ENCODE measurements at regions of chr5 and their contacts with region 1.

Region 1: DNA sequence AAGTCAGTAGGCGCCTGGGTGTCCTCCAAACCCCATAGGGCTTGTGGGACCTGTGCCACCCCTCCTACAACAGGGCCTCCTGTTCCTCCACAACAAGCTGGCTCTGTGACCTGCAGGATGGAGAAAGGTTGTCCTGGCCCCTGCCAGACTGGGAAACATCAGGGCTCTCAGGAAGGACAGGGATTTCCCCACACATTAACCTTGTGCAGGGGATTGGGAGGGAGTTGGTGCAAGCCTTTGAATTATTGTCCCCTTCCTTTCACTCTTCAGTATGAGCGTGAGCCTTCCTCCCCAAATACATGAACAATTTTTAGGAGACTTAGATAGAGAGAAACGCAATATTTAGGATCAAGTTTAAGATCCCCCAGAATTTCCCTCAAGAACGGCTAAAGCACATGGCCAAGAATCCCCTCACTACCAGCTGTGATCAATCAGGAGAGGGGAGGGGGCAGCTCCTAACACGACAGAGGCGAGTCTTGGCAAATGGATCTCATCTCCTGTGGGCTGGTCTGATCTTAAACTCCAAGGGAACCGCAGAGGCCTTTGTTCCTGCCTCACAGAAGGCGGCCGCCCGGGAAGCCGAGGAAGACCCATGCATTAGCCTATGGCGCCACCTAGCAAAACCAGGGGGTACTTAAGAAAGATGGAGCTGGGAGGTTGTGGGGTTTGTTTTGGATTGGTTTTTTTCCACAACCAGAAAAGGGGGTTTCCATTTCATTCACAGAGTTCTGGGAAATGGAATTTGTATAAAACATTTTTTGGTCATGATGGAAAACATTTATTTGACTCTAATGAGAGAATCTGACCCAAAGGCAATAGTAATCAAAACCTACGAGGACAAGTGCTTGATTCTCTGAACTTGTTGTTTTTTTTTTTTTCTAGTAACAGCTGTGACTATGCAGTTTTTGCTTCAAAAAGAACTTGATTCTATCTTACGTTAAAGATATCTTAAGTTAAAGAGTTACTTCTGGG is 36.1 kb upstream of the OSMR start:
- DNase-seq: peak; percentile 83
- H3K4me3 ChIP-seq: no peak overlapping the region
- H3K4me3 Mint-ChIP-seq: no peak overlapping the region
- H3K27ac Mint-ChIP-seq: no peak overlapping the region
- H3K4me1 ChIP-seq: peaks cover 12% of the 10 kb centered on the region
- H3K4me1 Mint-ChIP-seq: no peaks in the 10 kb centered on the region
- H3K27me3 ChIP-seq: no peaks in the 10 kb centered on the region
- H3K27me3 Mint-ChIP-seq: no peaks in the 10 kb centered on the region
- CTCF ChIP-seq: peak; percentile 88 to 93

Region 2: DNA sequence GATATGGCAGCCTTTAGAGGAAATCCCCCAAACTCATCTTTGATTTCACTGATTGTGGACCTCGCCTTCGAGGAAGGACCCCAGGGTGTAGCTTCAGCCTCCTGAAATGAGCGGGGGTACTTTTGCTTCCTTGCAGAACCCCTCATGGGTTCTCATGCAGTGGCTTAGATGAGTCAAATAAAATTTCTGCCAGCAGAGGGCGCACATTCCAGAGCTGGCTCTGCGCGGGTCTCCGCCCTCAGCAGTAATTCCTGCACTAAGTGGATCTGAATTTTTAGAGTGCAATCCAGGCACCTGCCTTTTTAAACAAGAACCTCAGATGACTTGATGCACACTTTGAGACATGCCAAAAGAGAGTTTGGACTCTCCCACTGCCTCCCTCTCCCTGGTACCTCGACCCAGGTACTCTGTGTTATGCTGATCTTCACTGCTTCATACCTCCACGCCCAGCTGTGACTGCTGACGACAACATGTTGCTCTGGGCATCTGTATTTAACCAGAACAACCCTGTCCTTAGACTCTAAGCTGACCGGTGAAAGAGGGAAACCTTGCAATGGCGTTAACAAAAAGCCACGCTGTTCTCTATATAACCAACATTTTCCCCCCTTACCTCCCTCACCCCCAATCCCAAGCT is 544.0 kb before region 1 on chr5:
- CTCF ChIA-PET with region 1: interaction called, 3 read pairs
- POLR2A ChIA-PET with region 1: no interaction called
- intact Hi-C with region 1: loop called (anchors 5 kb)
- DNase-seq: peak; percentile 65 to 81
- H3K4me3 ChIP-seq: no peak overlapping the region
- H3K4me3 Mint-ChIP-seq: no peak overlapping the region
- H3K27ac Mint-ChIP-seq: no peak overlapping the region
- H3K4me1 ChIP-seq: no peaks in the 10 kb centered on the region; the same call in 1 of the 2 replicates
- H3K4me1 Mint-ChIP-seq: peaks cover 6% of the 10 kb centered on the region
- H3K27me3 ChIP-seq: no peaks in the 10 kb centered on the region; the same call in 1 of the 2 replicates
- H3K27me3 Mint-ChIP-seq: peaks cover 16% of the 10 kb centered on the region
- CTCF ChIP-seq: peak; percentile 79 to 82

Region 3: DNA sequence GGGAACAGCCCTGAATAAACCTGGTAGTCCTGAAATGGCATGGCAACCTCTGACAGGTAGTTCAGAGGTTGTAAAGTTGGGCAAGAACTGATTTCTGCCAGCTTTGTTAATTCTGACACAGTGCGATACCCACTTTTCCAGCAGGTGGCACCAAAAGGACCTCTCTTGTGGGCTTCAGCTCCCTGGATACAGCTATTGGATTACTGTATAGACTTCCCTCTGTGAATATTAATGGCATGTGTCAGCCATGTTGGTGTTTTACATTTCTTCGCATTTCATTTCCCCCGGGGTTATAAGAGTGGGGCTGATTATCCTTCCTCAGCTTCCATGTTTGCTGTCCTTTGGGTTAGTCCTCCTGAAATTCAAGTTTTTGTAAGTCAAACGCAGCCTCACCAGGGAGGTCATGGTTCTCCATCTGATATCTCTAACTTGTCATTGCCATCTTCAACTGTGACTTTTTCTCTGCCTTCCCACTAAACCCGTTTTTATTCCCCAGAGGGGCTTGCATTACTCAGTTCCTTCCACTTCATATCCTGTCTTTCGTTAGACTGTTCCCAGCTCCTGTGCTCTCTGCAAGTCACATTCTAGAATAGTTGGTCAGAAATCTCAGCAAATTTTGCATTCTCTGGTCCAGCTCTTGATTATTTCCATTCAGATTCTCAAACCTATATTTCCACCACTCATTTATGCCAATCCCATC is 388.8 kb before region 1 on chr5:
- CTCF ChIA-PET with region 1: interaction called, 88 read pairs
- POLR2A ChIA-PET with region 1: interaction called, 3 read pairs
- intact Hi-C with region 1: loop called (anchors 1 kb)
- DNase-seq: peak; percentile 65 to 74
- H3K4me3 ChIP-seq: no peak overlapping the region
- H3K4me3 Mint-ChIP-seq: no peak overlapping the region
- H3K27ac Mint-ChIP-seq: no peak overlapping the region
- H3K4me1 ChIP-seq: no peaks in the 10 kb centered on the region
- H3K4me1 Mint-ChIP-seq: no peaks in the 10 kb centered on the region
- H3K27me3 ChIP-seq: no peaks in the 10 kb centered on the region
- H3K27me3 Mint-ChIP-seq: no peaks in the 10 kb centered on the region
- CTCF ChIP-seq: peak; percentile 69 to 79

Region 4: GRCh38 chr5:38551030-38552017 is 258.4 kb before region 1 on chr5:
- CTCF ChIA-PET with region 1: no interaction called
- POLR2A ChIA-PET with region 1: no interaction called
- intact Hi-C with region 1: loop called (anchors 2 kb)
- DNase-seq: peak in 1 of 2 experiments; percentile 23
- H3K4me3 ChIP-seq: no peak overlapping the region
- H3K4me3 Mint-ChIP-seq: no peak overlapping the region
- H3K27ac Mint-ChIP-seq: peak overlapping the region; percentile 25
- H3K4me1 ChIP-seq: peaks cover 40% of the 10 kb centered on the region
- H3K4me1 Mint-ChIP-seq: peaks cover 12% of the 10 kb centered on the region
- H3K27me3 ChIP-seq: no peaks in the 10 kb centered on the region
- H3K27me3 Mint-ChIP-seq: no peaks in the 10 kb centered on the region
- CTCF ChIP-seq: peak; percentile 32 to 53

Region 5: DNA sequence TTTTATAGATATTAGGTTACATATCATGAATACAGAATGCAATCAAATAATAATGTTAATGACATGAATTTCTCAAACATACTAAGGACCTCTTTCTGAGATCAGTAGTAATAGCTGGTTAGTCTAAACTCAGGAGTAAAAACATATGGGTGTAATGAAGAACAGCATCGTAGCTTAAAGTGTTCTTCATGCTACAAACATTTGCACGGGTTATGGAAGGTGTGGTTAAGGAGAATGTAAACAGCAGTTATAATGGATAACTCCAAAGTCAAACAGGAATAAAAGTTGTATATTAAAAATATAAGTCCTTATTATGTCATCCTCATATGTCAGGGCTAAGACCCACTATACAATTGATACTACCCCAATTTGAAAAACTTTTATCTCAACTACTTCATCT is 152.0 kb after region 1 on chr5:
- CTCF ChIA-PET with region 1: no interaction called
- POLR2A ChIA-PET with region 1: no interaction called
- intact Hi-C with region 1: no loop called
- DNase-seq: no peak
- H3K4me3 ChIP-seq: no peak overlapping the region
- H3K4me3 Mint-ChIP-seq: no peak overlapping the region
- H3K27ac Mint-ChIP-seq: no peak overlapping the region
- H3K4me1 ChIP-seq: no peaks in the 10 kb centered on the region
- H3K4me1 Mint-ChIP-seq: no peaks in the 10 kb centered on the region
- H3K27me3 ChIP-seq: no peaks in the 10 kb centered on the region
- H3K27me3 Mint-ChIP-seq: no peaks in the 10 kb centered on the region
- CTCF ChIP-seq: no peak

Measured in Caco-2 (cell line).